Pancreas (tissue), 10 donors: ENCODE measurements at regions of chr17 and their contacts with region 1.

Region 1: GRCh38 chr17:67475236-67475937 is 98.3 kb downstream of the PITPNC1 start:
- DNase-seq: peak; percentile 74 to 90 (median 85)
- ATAC-seq: peak; percentile 92 to 98 (median 96)
- H3K4me3 ChIP-seq: no peak overlapping the region
- H3K27ac ChIP-seq: peak overlapping the region in 1 of 4 donors; percentile 25
- H3K4me1 ChIP-seq: peaks cover 0 to 7% (median 3%) of the 10 kb centered on the region in 3 donors
- H3K27me3 ChIP-seq: no peaks in the 10 kb centered on the region
- CTCF ChIP-seq: peak; percentile 77 to 86 (median 80)

Region 2: DNA sequence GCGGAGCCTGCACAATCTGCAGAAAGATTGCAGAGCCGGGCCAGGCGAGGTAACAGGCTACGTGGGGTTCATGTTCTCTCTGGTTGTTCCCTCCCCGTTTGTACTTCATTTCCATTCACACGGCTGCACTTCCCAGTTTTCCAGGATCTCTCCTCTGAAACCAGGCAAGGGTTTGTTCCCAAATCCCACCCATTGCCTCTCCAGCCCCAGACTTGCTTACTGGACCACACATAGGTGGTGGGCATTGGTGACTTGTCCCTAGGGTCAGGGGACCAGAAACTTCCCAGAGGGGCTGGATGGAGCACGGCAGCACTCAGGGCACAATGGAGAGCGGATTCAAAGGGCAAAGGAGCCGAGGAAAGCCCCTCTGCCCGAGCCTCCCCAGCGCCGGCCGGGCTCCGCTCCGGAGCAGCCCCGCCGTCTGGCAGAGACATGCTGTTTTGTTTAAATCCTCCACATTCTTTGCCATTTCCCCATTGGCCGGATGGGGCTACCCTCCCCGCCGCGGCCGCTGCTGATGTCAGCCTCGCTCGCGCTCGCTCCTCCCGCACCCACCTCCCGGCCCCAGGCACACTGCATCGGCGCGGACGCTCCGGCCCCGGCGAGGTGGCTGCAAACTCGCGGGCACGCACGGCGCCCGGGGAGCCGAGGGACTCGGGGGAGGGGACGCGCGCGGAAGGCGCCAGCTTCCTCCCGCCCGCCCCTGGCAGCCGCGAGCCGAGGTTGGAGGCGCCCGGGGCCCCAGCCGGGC is 98.5 kb before region 1 on chr17 and contains the start of gene PITPNC1:
- intact Hi-C with region 1: loop called in 1 of 3 experiments (anchors 5 kb)
- DNase-seq: peak; percentile 86 to 95 (median 92)
- ATAC-seq: peak; percentile 74 to 83 (median 80)
- H3K4me3 ChIP-seq: peak within 1 kb of the TSS; percentile 76 to 98 (median 89)
- H3K27ac ChIP-seq: peak within 1 kb of the TSS; percentile 87 to 94 (median 94)
- H3K4me1 ChIP-seq: peaks cover 3 to 8% (median 7%) of the 10 kb centered on the region in 3 donors
- H3K27me3 ChIP-seq: no peaks in the 10 kb centered on the region
- CTCF ChIP-seq: no peak
- total RNA-seq, gene PITPNC1: 21.6 to 28.8 (median 25.3) TPM

Region 3: GRCh38 chr17:67390646-67391384 is 84.6 kb before region 1 on chr17:
- intact Hi-C with region 1: loop called in 1 of 3 experiments (anchors 10 kb)
- DNase-seq: peak in 4 of 6 donors; percentile 61 to 81 (median 72)
- ATAC-seq: peak; percentile 86 to 92 (median 90)
- H3K4me3 ChIP-seq: no peak overlapping the region
- H3K27ac ChIP-seq: peak overlapping the region; percentile 24 to 74 (median 58)
- H3K4me1 ChIP-seq: peaks cover 5 to 19% (median 15%) of the 10 kb centered on the region in 3 donors
- H3K27me3 ChIP-seq: no peaks in the 10 kb centered on the region
- CTCF ChIP-seq: no peak

Region 4: DNA sequence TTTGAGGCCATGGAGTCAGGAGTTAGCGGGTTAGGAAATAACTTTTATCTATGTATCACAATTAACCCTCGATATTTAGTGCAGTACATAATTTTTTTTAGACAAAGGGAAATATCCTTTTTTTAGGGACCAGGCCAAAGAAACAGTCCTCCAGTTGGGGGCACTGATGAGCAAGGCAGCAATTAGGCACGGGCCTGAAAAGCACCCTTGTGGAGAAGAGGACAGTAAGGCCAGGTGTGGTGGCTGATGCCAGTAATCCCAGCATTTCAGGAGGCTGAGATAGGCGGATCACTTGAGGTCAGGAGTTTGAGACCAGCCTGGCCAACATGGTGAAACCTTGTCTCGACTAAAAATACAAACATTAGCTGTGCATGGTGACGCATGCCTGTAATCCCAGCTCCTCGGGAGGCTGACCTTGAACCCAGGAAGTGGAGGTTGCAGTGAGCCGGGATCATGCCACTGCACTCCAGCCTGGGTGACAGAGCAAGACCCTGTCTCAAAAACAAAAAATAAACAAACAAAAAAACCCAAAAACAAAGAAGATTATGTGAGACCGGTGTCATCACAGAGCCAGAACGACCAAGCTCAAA is 84.1 kb after region 1 on chr17:
- intact Hi-C with region 1: no loop called
- DNase-seq: no peak
- ATAC-seq: peak; percentile 29 to 76 (median 33)
- H3K4me3 ChIP-seq: no peak overlapping the region
- H3K27ac ChIP-seq: no peak overlapping the region
- H3K4me1 ChIP-seq: peaks cover 0 to 6% (median 6%) of the 10 kb centered on the region in 3 donors
- H3K27me3 ChIP-seq: no peaks in the 10 kb centered on the region
- CTCF ChIP-seq: no peak